Activated CD4-positive, alpha-beta memory T cell treated with anti-CD3 and anti-CD28 coated beads for 36 hours (primary cell): ENCODE measurements at regions of chr22 and their contacts with region 1.

Region 1: GRCh38 chr22:38872172-38872830 is at the start of gene CBX6:
- DNase-seq: peak; percentile 96
- H3K4me3 Mint-ChIP-seq: peak within 1 kb of the TSS; percentile 93
- H3K27ac Mint-ChIP-seq: peak within 1 kb of the TSS; percentile 91
- H3K4me1 Mint-ChIP-seq: peaks cover 53% of the 10 kb centered on the region
- H3K27me3 Mint-ChIP-seq: no peaks in the 10 kb centered on the region
- total RNA-seq, gene CBX6: 116 to 117 TPM

Region 2: DNA sequence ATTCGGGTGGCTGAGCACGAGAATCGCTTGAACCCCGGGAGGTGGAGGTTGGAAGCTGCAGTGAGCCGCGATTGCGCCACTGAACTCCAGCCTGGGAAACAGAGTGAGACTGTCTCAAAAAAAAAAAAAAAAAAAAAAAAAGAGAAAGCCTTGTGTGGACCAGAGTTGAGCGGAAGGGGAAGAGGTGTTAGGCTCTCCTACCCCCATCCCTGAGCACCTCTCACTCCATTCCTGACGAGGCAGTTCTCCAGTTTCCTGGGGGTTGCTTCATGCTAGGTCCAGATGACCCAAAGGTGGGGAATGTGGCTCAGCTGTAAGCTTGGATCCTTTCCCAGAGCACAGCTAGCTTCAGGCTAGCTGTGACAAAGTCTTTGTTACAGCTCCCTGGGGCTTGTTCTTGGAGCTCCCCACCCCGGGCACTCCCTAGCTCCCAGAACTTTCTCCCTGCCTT is 69.6 kb before region 1 on chr22:
- CTCF ChIA-PET with region 1: no interaction called
- POLR2A ChIA-PET with region 1: no interaction called
- intact Hi-C with region 1: no loop called
- DNase-seq: no peak
- H3K4me3 Mint-ChIP-seq: no peak overlapping the region
- H3K27ac Mint-ChIP-seq: no peak overlapping the region
- H3K4me1 Mint-ChIP-seq: peaks cover 8% of the 10 kb centered on the region
- H3K27me3 Mint-ChIP-seq: peaks cover 12% of the 10 kb centered on the region

Region 3: GRCh38 chr22:38835888-38836301 is 36.4 kb before region 1 on chr22:
- CTCF ChIA-PET with region 1: interaction called, 36 read pairs
- POLR2A ChIA-PET with region 1: no interaction called
- intact Hi-C with region 1: no loop called
- DNase-seq: no peak
- H3K4me3 Mint-ChIP-seq: no peak overlapping the region
- H3K27ac Mint-ChIP-seq: no peak overlapping the region
- H3K4me1 Mint-ChIP-seq: no peaks in the 10 kb centered on the region
- H3K27me3 Mint-ChIP-seq: peaks cover 2% of the 10 kb centered on the region

Region 4: DNA sequence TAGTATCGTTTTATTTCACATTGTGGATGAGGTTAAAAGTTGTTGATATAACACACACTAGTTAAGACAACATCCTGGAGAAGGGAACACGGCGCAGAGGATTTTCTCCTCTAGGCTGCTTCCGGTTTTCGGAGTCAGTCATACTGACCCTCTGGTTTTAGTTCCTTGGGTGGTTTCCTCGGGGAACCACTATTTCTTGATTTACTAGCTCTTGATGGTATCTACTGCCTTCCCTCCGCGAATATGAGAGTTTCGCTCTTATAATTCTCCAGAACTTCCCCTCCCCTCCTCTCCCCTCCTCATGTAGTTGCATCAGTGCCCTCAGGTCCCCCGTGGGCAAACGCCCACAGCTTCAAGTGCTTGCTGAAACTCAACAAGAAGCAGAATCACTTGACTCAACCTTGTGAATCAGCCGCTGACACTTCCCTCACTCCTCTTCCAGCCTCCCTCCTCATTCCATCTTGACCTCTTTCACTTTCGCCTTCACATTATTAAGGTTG is 69.2 kb after region 1 on chr22:
- CTCF ChIA-PET with region 1: interaction called, 29 read pairs
- POLR2A ChIA-PET with region 1: interaction called, 29 read pairs
- intact Hi-C with region 1: loop called (anchors 1 kb)
- DNase-seq: peak; percentile 89
- H3K4me3 Mint-ChIP-seq: peak overlapping the region; percentile 45
- H3K27ac Mint-ChIP-seq: peak overlapping the region; percentile 80
- H3K4me1 Mint-ChIP-seq: peaks cover 35% of the 10 kb centered on the region
- H3K27me3 Mint-ChIP-seq: peaks cover 28% of the 10 kb centered on the region

Region 5: GRCh38 chr22:39003165-39003638 is 130.9 kb after region 1 on chr22:
- CTCF ChIA-PET with region 1: interaction called, 180 read pairs
- POLR2A ChIA-PET with region 1: interaction called, 14 read pairs
- intact Hi-C with region 1: loop called (anchors 1 kb)
- DNase-seq: peak; percentile 89
- H3K4me3 Mint-ChIP-seq: no peak overlapping the region
- H3K27ac Mint-ChIP-seq: peak overlapping the region; percentile 6
- H3K4me1 Mint-ChIP-seq: peaks cover 8% of the 10 kb centered on the region
- H3K27me3 Mint-ChIP-seq: no peaks in the 10 kb centered on the region

Region 6: GRCh38 chr22:39123751-39124601 is 251.7 kb after region 1 on chr22:
- CTCF ChIA-PET with region 1: interaction called, 18 read pairs
- POLR2A ChIA-PET with region 1: no interaction called
- intact Hi-C with region 1: no loop called
- DNase-seq: no peak
- H3K4me3 Mint-ChIP-seq: no peak overlapping the region
- H3K27ac Mint-ChIP-seq: no peak overlapping the region
- H3K4me1 Mint-ChIP-seq: peaks cover 16% of the 10 kb centered on the region
- H3K27me3 Mint-ChIP-seq: no peaks in the 10 kb centered on the region